AG04449 (cell line): ENCODE measurements at regions of chr20 and their contacts with region 1.

Region 1: GRCh38 chr20:51311606-51312495 is 230.7 kb downstream of the NFATC2 start:
- DNase-seq: no peak
- H3K4me3 ChIP-seq: no peak overlapping the region
- CTCF ChIP-seq: no peak

Region 2: GRCh38 chr20:50929299-50930138 is 382.3 kb before region 1 on chr20:
- CTCF ChIA-PET with region 1: no interaction called
- POLR2A ChIA-PET with region 1: no interaction called
- DNase-seq: peak; percentile 78
- H3K4me3 ChIP-seq: peak overlapping the region; percentile 79
- CTCF ChIP-seq: peak; percentile 97

Region 3: DNA sequence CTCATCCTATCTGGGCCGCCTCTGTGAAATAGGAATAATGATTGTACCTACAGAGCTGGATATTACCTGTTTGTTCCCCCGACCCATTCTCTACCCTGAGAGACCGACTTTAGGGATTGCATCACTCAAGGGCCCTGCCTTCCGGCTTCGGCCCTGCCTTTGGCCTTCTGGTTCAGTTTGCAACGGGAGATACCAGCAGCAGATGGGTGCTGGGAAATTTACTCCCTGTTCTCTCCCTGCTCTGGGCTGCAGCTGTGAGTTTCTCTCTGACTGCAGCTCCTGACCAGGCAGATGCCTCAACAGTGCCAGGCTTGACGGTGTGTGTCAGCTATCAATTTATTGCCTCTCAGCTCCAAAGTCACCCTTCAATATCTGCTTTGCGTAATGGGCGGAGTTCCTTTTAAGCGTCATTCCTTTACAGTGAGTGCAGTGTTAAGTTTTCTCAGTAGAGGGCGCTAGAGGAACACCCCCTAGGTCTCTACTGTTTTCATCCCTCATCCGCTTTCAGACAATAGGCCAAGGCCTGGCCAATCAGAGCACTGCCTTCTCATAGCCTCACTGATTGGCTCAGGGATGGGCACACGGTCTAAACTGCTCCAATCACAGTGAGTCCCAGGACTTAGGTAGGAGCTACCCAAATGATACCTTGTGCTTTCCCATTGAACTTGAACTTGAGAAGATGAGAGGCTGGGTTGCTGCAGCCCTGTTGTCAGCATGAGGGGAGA is 319.0 kb before region 1 on chr20:
- CTCF ChIA-PET with region 1: interaction called, 626 read pairs
- POLR2A ChIA-PET with region 1: no interaction called
- DNase-seq: no peak
- H3K4me3 ChIP-seq: no peak overlapping the region
- CTCF ChIP-seq: peak; percentile 57

Region 4: GRCh38 chr20:51298141-51298749 is 13.6 kb before region 1 on chr20:
- CTCF ChIA-PET with region 1: interaction called, 63 read pairs
- POLR2A ChIA-PET with region 1: no interaction called
- DNase-seq: no peak
- H3K4me3 ChIP-seq: no peak overlapping the region
- CTCF ChIP-seq: no peak

Region 5: DNA sequence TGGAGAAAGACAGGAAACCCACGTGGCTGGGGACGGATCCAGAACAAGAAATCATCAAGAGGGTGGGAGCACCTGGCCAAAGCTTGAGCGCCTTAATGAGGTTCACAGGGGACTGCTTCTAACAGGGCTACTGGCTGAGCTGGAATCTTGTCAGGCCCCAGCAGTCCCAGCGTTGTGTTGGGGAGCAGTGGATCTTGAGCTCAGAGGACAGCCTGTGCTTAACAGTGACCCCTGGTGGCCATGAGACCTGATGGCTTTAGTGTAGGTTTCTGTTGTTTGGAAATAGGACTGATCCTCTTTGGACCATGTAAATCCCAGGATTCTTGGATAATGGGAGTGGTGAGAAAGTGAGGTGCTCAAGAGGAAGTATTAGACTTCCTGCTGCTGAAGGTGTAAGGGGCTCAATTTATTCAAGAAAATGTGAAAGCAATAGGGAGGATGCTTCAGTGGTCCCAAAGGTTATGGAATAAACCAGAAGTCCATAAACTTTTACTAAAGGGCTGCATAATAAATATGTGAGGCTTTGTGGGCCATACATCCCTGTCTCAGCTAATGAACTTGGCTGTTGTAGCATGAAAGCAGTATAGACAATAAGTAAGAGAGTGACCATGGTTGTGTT is 14.5 kb after region 1 on chr20:
- CTCF ChIA-PET with region 1: interaction called, 108 read pairs
- POLR2A ChIA-PET with region 1: no interaction called
- DNase-seq: no peak
- H3K4me3 ChIP-seq: no peak overlapping the region
- CTCF ChIP-seq: no peak

Region 6: DNA sequence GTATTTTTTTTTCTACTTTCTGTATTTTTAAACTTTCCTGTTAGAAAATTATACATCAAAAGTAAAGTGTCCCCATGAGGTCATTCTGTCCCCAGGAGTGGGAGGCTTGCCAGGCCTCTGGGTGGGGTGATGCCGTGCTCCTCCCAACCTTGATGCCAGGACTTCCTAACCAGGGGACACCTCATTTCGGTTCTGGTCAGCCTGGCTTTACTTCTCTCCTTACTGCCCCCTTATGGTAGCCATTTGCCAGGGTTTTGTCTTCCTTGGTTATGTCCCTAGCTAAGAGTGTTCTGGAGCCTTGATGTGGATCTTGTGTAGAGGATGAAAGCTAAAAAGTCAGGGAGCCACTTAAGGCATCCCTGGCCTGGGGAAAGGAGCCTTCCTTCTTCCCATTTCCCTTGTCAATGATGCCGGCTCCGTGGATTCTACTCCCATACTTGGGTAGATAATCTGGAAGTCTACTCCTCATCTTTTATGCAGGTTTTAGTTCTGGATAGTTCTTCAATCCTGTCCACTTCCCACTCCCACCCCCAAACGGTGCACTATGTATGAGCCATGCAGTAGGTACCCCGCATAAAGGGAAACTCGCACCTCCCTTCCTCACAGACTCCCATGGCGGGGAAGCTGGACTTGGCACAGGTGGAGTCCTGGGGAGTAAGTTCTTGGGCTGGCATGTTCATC is 654.6 kb after region 1 on chr20:
- CTCF ChIA-PET with region 1: no interaction called
- POLR2A ChIA-PET with region 1: no interaction called
- DNase-seq: no peak
- H3K4me3 ChIP-seq: no peak overlapping the region
- CTCF ChIP-seq: peak; percentile 68

Region 7: GRCh38 chr20:52256454-52256853 is 944.6 kb after region 1 on chr20:
- CTCF ChIA-PET with region 1: no interaction called
- POLR2A ChIA-PET with region 1: no interaction called
- DNase-seq: no peak
- H3K4me3 ChIP-seq: no peak overlapping the region
- CTCF ChIP-seq: no peak